GM13977 (cell line): ENCODE measurements at regions of chr20 and their contacts with region 1.

Region 1: GRCh38 chr20:57514273-57514751 is 10.6 kb downstream of the CTCFL start:
- DNase-seq: peak; percentile 61
- CTCF ChIP-seq: peak; percentile 70

Region 2: DNA sequence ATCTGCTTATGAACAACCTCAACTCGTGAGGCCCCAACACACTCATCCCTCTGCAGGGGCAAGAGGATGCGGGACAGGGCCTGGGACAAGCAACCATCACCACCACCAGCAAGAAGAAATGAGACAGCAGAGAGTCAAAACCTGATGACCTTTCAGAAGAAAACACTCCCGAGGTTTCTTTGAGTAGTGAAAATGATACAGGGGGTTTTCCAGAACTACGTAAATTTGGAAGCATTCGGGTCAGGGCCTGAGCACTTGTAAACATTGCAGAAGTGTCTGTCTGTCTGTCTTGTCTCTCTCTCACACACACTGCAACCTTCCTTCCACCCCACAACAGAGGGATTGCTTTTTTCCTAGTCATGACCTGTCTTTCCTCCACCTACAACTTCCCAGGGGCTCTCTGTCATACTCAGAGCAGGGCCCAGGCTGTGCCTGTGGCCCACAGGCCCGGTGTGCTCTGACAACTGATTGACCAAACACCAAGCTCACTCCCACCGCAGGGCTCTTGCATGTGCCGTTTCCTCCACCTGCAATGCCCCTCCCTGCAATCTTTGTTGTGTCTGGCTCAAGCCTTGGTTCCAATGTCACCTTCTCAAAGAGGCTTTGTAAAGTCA is 338.8 kb before region 1 on chr20:
- in situ Hi-C with region 1: no loop called
- DNase-seq: peak; percentile 48
- CTCF ChIP-seq: no peak

Region 3: GRCh38 chr20:57414867-57415592 is 99.3 kb before region 1 on chr20:
- in situ Hi-C with region 1: no loop called
- DNase-seq: no peak
- CTCF ChIP-seq: no peak

Region 4: DNA sequence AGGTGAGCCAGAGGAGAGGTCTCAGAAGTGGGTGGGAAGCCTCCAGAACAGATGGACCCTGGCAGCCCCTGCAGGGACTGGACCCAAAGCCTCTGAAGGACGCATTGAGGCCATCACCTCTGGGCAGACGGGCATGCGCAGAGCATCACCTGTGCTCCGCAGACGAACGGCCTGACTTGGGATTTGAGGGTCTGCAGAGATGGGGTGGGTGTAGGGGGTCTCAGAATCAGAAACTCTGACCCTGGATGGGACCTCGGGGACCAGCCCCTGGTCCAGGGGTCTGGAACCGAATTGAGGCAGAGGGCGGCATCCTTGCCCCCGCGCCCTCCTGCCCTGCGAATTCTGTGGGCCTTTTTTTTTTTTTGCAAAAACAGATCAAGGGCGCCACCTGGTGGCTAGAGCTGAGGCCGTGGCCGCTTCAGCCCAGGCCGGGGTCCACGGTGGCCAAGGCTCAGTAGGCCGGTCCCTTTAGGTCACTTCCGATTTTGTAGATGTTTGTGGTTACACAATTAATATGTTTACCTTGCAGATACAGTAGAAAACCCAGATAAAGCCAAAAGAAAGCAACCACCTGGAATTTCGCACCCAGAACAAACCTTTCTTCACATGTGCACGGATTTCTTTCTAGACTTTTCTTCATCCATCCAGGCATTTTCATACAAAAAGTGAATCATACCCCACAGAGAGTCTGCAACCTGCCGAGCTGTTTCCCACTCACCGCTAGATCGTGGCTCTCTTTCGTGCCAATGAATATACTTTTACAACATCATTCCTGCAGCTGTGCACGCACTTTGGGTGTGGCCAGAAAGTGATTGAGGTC is 80.0 kb after region 1 on chr20:
- in situ Hi-C with region 1: loop called (anchors 5 kb)
- DNase-seq: peak; percentile 83
- CTCF ChIP-seq: peak; percentile 77